Activated CD4-positive, alpha-beta memory T cell treated with anti-CD3 and anti-CD28 coated beads for 36 hours (primary cell): ENCODE measurements at regions of chr6 and their contacts with region 1.

Region 1: GRCh38 chr6:108874470-108875160 is 26.4 kb downstream of the ARMC2 start:
- DNase-seq: peak; percentile 73
- H3K4me3 Mint-ChIP-seq: peak overlapping the region; percentile 65
- H3K27ac Mint-ChIP-seq: peak overlapping the region; percentile 91
- H3K4me1 Mint-ChIP-seq: peaks cover 46% of the 10 kb centered on the region
- H3K27me3 Mint-ChIP-seq: peaks cover 2% of the 10 kb centered on the region

Region 2: DNA sequence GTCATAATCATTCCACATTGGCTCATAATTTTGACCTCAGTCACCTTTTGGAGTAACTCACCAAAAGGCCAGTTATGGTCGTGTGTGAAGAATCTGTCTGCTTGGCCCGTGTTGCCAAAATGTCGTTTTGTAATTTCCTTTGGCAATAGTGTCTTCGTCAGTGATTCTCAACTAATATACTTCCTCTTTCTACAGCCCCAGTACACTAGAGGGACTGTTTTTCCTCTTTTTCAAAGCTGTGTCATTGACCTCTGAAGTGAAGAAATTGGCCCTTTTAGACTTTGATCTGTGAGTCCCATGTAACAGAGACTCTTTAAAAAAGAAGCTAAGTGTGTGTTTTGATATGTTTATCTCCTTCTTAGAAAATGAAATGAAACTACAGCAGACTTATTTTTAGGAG is 308.7 kb before region 1 on chr6:
- CTCF ChIA-PET with region 1: no interaction called
- POLR2A ChIA-PET with region 1: no interaction called
- intact Hi-C with region 1: loop called (anchors 1 kb)
- DNase-seq: no peak
- H3K4me3 Mint-ChIP-seq: no peak overlapping the region
- H3K27ac Mint-ChIP-seq: peak overlapping the region; percentile 70
- H3K4me1 Mint-ChIP-seq: peaks cover 68% of the 10 kb centered on the region
- H3K27me3 Mint-ChIP-seq: no peaks in the 10 kb centered on the region

Region 3: DNA sequence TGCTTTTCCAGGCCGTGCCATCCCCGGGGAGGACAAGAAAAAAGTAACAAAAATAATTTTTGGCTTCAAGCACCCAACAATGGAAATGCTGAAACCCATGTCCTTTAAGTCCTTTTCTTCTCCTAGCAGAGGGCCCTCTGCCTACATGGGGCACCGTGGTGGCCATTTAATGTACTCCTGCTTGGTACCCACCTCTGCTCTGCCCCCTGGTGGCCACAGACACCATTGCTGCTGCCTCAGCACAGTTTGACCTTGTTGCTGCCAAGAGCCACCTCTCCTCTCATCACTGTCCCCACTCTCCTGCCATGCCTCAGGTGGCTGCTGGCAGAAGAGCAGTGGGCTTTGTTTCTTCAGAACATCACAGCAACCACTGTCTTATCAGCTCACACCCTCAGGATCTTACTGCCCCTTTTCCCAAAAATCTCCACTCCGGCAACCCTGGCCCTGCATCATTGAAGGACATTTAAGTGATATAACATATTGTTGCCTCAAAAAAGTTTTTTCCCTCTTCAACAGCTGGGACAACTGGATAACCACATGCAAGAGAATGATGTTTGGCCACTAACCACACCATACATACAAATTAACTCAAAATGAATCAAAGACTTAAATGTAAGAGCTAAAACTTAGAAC is 39.3 kb before region 1 on chr6:
- CTCF ChIA-PET with region 1: interaction called, 8 read pairs
- POLR2A ChIA-PET with region 1: no interaction called
- intact Hi-C with region 1: loop called (anchors 1 kb)
- DNase-seq: peak; percentile 91
- H3K4me3 Mint-ChIP-seq: no peak overlapping the region
- H3K27ac Mint-ChIP-seq: no peak overlapping the region
- H3K4me1 Mint-ChIP-seq: peaks cover 13% of the 10 kb centered on the region
- H3K27me3 Mint-ChIP-seq: no peaks in the 10 kb centered on the region

Region 4: GRCh38 chr6:108896111-108896661 is 21.6 kb after region 1 on chr6:
- CTCF ChIA-PET with region 1: interaction called, 5 read pairs
- POLR2A ChIA-PET with region 1: no interaction called
- intact Hi-C with region 1: loop called (anchors 2 kb)
- DNase-seq: no peak
- H3K4me3 Mint-ChIP-seq: no peak overlapping the region
- H3K27ac Mint-ChIP-seq: peak overlapping the region; percentile 56
- H3K4me1 Mint-ChIP-seq: peaks cover 33% of the 10 kb centered on the region
- H3K27me3 Mint-ChIP-seq: no peaks in the 10 kb centered on the region

Region 5: GRCh38 chr6:108947114-108947854 is 72.7 kb after region 1 on chr6:
- CTCF ChIA-PET with region 1: no interaction called
- POLR2A ChIA-PET with region 1: no interaction called
- intact Hi-C with region 1: loop called (anchors 2 kb)
- DNase-seq: no peak
- H3K4me3 Mint-ChIP-seq: no peak overlapping the region
- H3K27ac Mint-ChIP-seq: no peak overlapping the region
- H3K4me1 Mint-ChIP-seq: peaks cover 34% of the 10 kb centered on the region
- H3K27me3 Mint-ChIP-seq: no peaks in the 10 kb centered on the region